GM12878 (cell line): ENCODE measurements at regions of chr5 and their contacts with region 1.

Region 1: DNA sequence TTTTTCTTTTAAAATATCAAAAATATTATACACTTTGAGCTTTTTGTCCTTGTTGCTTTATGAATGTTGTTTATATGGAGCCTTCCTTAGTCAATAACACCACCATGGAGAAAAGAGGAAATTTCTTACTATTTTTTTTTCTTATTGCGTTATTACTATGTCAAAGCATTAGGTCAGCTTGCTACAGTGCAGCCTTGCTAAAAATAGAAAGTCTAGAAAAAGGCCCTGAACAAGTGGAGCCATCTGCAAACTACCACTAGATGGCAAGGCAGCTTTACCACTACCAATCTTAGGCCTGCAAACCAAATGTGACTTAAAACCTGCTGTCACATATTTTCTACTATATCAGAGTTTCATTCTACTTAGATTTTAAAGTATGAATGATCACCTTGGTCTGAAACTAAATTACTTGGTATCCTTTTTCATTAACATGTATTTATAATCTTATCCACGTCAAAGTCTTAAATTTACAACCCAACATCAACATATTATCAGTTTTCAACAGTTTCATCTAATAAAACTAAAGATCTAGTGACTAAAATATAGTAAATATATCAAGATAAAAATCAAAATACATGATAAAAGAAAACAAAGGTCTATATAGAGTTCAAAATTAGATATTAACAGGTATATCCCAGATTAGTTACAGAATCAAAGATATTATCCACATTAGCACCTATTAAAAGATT is 113.1 kb upstream of the ACOT12 start:
- DNase-seq: peak; percentile 67
- ATAC-seq: peak; percentile 100
- H3K4me3 ChIP-seq: no peak overlapping the region
- H3K27ac ChIP-seq: no peak overlapping the region
- H3K4me1 ChIP-seq: no peaks in the 10 kb centered on the region
- H3K27me3 ChIP-seq: no peaks in the 10 kb centered on the region
- CTCF ChIP-seq: peak; percentile 84 to 91 (median 90); a peak in 5 of 6 replicates
- EP300 ChIP-seq: no peak
- POLR2A ChIP-seq: no peak
- RAD21 ChIP-seq: peak; percentile 92

Region 2: GRCh38 chr5:81838307-81838906 is 331.4 kb after region 1 on chr5:
- CTCF ChIA-PET with region 1: interaction called, 45 read pairs
- POLR2A ChIA-PET with region 1: no interaction called
- RAD21 ChIA-PET with region 1: interaction called, 10 read pairs
- SMC1A ChIA-PET with region 1: interaction called, 24 read pairs
- in situ Hi-C with region 1: loop called (anchors 5 kb)
- intact Hi-C with region 1: loop called (anchors 1 kb)
- DNase-seq: no peak
- ATAC-seq: peak; percentile 92
- H3K4me3 ChIP-seq: no peak overlapping the region
- H3K27ac ChIP-seq: no peak overlapping the region
- H3K4me1 ChIP-seq: no peaks in the 10 kb centered on the region
- H3K27me3 ChIP-seq: no peaks in the 10 kb centered on the region
- CTCF ChIP-seq: peak; percentile 51 to 61 (median 54)
- EP300 ChIP-seq: no peak
- POLR2A ChIP-seq: no peak
- RAD21 ChIP-seq: peak; percentile 74

Region 3: DNA sequence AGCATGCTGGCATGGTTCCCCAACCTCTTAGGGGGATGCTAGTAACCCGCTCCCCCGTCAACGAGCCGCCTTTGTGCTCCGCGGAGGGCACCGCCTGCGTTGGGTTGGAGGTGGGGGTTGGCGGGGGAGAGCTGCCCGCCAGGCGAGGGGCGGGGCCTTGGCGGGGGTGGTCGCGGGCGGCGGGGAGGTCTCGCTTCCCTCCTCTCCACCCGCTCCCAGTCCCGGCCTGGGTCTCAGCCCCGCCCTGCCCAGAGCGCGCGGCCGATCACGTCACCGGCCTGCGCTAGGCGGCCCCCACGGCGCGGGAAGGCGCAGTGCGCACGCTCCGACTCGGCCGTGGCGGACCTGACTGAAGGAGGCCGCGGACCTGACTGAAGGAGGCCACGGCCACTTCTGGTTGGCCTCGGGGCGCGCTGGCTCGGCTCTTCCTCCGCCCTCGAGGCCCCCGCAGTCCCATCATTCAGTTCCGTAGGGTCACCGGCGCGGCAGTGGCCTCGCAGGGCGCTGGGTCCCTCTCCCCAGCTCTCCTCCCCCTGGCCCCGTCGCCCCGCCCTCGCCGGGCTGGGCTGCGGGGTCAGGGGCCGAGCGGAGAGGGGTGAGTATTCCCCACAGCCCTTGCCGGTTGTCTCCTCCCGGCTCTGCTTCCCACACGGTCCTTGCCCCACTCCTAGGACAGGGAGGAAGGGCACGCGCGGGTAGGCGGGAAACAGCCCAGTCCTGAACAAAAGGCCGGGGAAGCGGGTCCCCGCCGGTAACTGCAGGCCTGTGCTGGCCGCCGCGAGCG is 464.9 kb after region 1 on chr5 and contains the start of gene ATG10:
- CTCF ChIA-PET with region 1: no interaction called
- POLR2A ChIA-PET with region 1: no interaction called
- RAD21 ChIA-PET with region 1: no interaction called
- SMC1A ChIA-PET with region 1: no interaction called
- in situ Hi-C with region 1: no loop called
- intact Hi-C with region 1: loop called (anchors 5 kb)
- DNase-seq: peak; percentile 69
- ATAC-seq: peak; percentile 97
- H3K4me3 ChIP-seq: peak within 1 kb of the TSS; percentile 79
- H3K27ac ChIP-seq: peak within 1 kb of the TSS; percentile 90
- H3K4me1 ChIP-seq: no peaks in the 10 kb centered on the region
- H3K27me3 ChIP-seq: no peaks in the 10 kb centered on the region
- CTCF ChIP-seq: no peak
- EP300 ChIP-seq: no peak
- POLR2A ChIP-seq: peak; percentile 98
- RAD21 ChIP-seq: no peak
- polyA plus RNA-seq, gene ATG10: 7.5 to 9.0 TPM

Region 4: GRCh38 chr5:82174128-82174918 is 667.3 kb after region 1 on chr5:
- CTCF ChIA-PET with region 1: interaction called, 7 read pairs
- POLR2A ChIA-PET with region 1: interaction called, 3 read pairs
- RAD21 ChIA-PET with region 1: interaction called, 5 read pairs
- SMC1A ChIA-PET with region 1: interaction called, 3 read pairs
- in situ Hi-C with region 1: loop called (anchors 5 kb)
- intact Hi-C with region 1: no loop called
- DNase-seq: peak; percentile 83
- ATAC-seq: peak; percentile 94
- H3K4me3 ChIP-seq: peak overlapping the region; percentile 0; the same call in 1 of the 2 replicates
- H3K27ac ChIP-seq: peak overlapping the region; percentile 69
- H3K4me1 ChIP-seq: peaks cover 25% of the 10 kb centered on the region
- H3K27me3 ChIP-seq: no peaks in the 10 kb centered on the region
- CTCF ChIP-seq: peak; percentile 64 to 78 (median 76)
- EP300 ChIP-seq: peak; percentile 99 to 100
- POLR2A ChIP-seq: no peak
- RAD21 ChIP-seq: peak; percentile 65